Heart left ventricle (tissue), 16 donors: ENCODE measurements at regions of chr12 and their contacts with region 1.

Region 1: GRCh38 chr12:78612190-78612589 is 252.4 kb upstream of the SYT1 start:
- DNase-seq: no peak
- ATAC-seq: no peak
- H3K4me3 ChIP-seq: no peak overlapping the region
- H3K27ac ChIP-seq: no peak overlapping the region
- H3K4me1 ChIP-seq: no peaks in the 10 kb centered on the region
- H3K27me3 ChIP-seq: no peaks in the 10 kb centered on the region
- CTCF ChIP-seq: no peak
- POLR2A ChIP-seq: no peak

Region 2: GRCh38 chr12:78683031-78683430 is 70.8 kb after region 1 on chr12:
- intact Hi-C with region 1: loop called in 1 of 10 experiments (anchors 10 kb)
- DNase-seq: no peak
- ATAC-seq: no peak
- H3K4me3 ChIP-seq: no peak overlapping the region
- H3K27ac ChIP-seq: no peak overlapping the region
- H3K4me1 ChIP-seq: no peaks in the 10 kb centered on the region
- H3K27me3 ChIP-seq: no peaks in the 10 kb centered on the region
- CTCF ChIP-seq: no peak
- POLR2A ChIP-seq: no peak

Region 3: GRCh38 chr12:78951803-78952538 is 339.8 kb after region 1 on chr12:
- intact Hi-C with region 1: no loop called
- DNase-seq: no peak
- ATAC-seq: no peak
- H3K4me3 ChIP-seq: no peak overlapping the region
- H3K27ac ChIP-seq: no peak overlapping the region
- H3K4me1 ChIP-seq: no peaks in the 10 kb centered on the region
- H3K27me3 ChIP-seq: no peaks in the 10 kb centered on the region
- CTCF ChIP-seq: no peak
- POLR2A ChIP-seq: no peak